ENCODE measurements at regions of chr14 and their contacts with region 1.

Region 1: GRCh38 chr14:77580964-77581505 is 35.4 kb downstream of the SPTLC2 start:
- DNase-seq: no peak
- H3K4me3 Mint-ChIP-seq: peak overlapping the region; percentile 61
- H3K27ac Mint-ChIP-seq: peak overlapping the region; percentile 73
- H3K4me1 Mint-ChIP-seq: peaks cover 28% of the 10 kb centered on the region
- H3K27me3 Mint-ChIP-seq: no peaks in the 10 kb centered on the region

Region 2: GRCh38 chr14:77607741-77608302 is 26.8 kb after region 1 on chr14:
- CTCF ChIA-PET with region 1: interaction called, 4 read pairs
- POLR2A ChIA-PET with region 1: interaction called, 15 read pairs
- DNase-seq: peak; percentile 24
- H3K4me3 Mint-ChIP-seq: peak overlapping the region; percentile 63
- H3K27ac Mint-ChIP-seq: peak overlapping the region; percentile 88
- H3K4me1 Mint-ChIP-seq: peaks cover 65% of the 10 kb centered on the region
- H3K27me3 Mint-ChIP-seq: no peaks in the 10 kb centered on the region